ENCODE measurements at regions of chr12 and their contacts with region 1.

Region 1: GRCh38 chr12:113912760-113913329 is 53.3 kb downstream of the RBM19 start:
- DNase-seq: peak in 1 of 2 donors; percentile 47
- H3K4me3 ChIP-seq: no peak overlapping the region
- CTCF ChIP-seq: peak in 1 of 3 donors; percentile 36
- POLR2A ChIP-seq: no peak

Region 2: DNA sequence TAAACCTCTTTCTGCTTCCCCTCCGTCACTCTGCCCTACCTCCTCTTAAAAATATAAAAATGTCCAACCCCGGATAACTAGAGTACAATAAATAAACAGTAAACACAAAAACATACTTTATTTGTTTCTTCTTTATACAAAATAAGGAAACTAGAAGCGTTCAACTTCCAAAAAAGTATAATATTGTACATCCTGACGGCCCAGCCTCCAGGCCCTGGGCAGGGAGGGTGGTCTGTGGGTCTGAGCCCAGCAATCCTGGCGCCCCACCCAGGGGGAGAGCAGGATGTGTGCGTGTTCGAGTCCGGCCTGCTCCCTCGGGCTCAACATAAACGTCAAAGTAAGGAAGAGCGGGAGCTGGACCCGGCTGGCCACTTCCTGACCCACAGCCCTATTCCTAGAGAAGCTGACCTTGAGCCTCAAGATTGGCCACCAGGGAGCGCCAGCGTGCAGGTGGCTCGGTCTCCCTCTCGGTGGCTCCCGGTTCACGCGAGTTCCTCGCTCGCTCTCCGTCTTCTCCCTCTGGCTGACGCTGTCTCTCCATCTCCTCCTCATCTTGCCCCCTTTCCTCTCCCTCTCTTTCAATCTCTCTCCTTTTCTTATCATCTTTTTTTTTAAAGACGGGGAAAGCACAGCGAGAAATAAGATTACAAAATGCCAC is 450.6 kb before region 1 on chr12:
- intact Hi-C with region 1: loop called (anchors 10 kb)
- DNase-seq: peak; percentile 64 to 95
- H3K4me3 ChIP-seq: no peak overlapping the region
- CTCF ChIP-seq: peak in 1 of 3 donors; percentile 51
- POLR2A ChIP-seq: no peak